MCF 10A (cell line): ENCODE measurements at regions of chr12 and their contacts with region 1.

Region 1: GRCh38 chr12:6890789-6891645 is 13.6 kb upstream of the LRRC23 start:
- DNase-seq: peak; percentile 93
- H3K4me3 Mint-ChIP-seq: peak overlapping the region; percentile 67
- H3K27ac Mint-ChIP-seq: peak overlapping the region; percentile 74
- H3K4me1 Mint-ChIP-seq: no peaks in the 10 kb centered on the region
- H3K27me3 Mint-ChIP-seq: no peaks in the 10 kb centered on the region
- CTCF ChIP-seq: peak; percentile 60

Region 2: GRCh38 chr12:6867413-6868210 is 23.4 kb before region 1 on chr12 and contains the start of gene TPI1:
- CTCF ChIA-PET with region 1: interaction called, 64 read pairs
- POLR2A ChIA-PET with region 1: interaction called, 37 read pairs
- intact Hi-C with region 1: loop called (anchors 1 kb)
- DNase-seq: peak; percentile 70
- H3K4me3 Mint-ChIP-seq: peak within 1 kb of the TSS; percentile 86
- H3K27ac Mint-ChIP-seq: peak within 1 kb of the TSS; percentile 82
- H3K4me1 Mint-ChIP-seq: peaks cover 30% of the 10 kb centered on the region
- H3K27me3 Mint-ChIP-seq: no peaks in the 10 kb centered on the region
- CTCF ChIP-seq: no peak
- total RNA-seq, gene TPI1: 498 and 549 TPM in 2 replicates

Region 3: GRCh38 chr12:6904280-6905278 is 13.6 kb after region 1 on chr12 and contains the start of gene LRRC23:
- CTCF ChIA-PET with region 1: interaction called, 15 read pairs
- POLR2A ChIA-PET with region 1: interaction called, 5 read pairs
- intact Hi-C with region 1: no loop called
- DNase-seq: peak; percentile 96
- H3K4me3 Mint-ChIP-seq: no peak within 1 kb of the TSS
- H3K27ac Mint-ChIP-seq: no peak within 1 kb of the TSS
- H3K4me1 Mint-ChIP-seq: peaks cover 2% of the 10 kb centered on the region
- H3K27me3 Mint-ChIP-seq: no peaks in the 10 kb centered on the region
- CTCF ChIP-seq: no peak
- total RNA-seq, gene LRRC23: 7.5 and 9.1 TPM in 2 replicates

Region 4: DNA sequence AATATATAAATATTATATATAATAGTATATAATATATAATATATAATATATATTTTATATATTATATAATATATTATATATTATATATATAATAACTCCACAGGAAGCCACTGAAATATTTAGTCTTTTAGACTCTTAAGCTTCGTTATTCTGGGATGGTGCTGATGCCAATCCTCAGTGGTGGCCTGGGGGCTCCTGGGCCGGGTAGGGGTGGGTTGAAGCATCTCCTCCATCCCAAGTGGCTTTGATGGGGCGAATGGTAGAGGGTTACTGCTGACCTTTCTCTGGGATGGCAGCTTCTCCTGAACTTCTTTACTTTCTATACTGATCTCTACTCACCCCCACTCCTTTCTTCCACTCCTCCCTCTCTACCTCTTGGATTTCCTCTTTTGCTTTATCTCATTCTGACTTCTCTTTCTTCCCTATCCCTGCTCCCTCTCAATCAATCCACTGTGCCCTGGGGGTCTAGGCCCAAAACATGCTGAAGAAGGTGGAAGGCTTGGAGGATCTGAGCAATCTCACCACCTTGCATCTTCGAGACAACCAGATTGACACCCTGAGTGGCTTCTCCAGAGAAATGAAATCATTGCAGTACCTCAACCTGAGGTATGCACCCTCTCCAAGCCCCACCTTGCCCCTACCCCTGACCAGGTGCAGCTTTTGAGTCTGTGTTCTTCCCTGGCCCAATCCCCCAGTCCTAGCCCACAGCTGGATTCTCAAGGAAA is 18.6 kb after region 1 on chr12:
- CTCF ChIA-PET with region 1: interaction called, 15 read pairs
- POLR2A ChIA-PET with region 1: interaction called, 5 read pairs
- intact Hi-C with region 1: no loop called
- DNase-seq: no peak
- H3K4me3 Mint-ChIP-seq: no peak overlapping the region
- H3K27ac Mint-ChIP-seq: no peak overlapping the region
- H3K4me1 Mint-ChIP-seq: peaks cover 2% of the 10 kb centered on the region
- H3K27me3 Mint-ChIP-seq: peaks cover 11% of the 10 kb centered on the region
- CTCF ChIP-seq: no peak

Region 5: DNA sequence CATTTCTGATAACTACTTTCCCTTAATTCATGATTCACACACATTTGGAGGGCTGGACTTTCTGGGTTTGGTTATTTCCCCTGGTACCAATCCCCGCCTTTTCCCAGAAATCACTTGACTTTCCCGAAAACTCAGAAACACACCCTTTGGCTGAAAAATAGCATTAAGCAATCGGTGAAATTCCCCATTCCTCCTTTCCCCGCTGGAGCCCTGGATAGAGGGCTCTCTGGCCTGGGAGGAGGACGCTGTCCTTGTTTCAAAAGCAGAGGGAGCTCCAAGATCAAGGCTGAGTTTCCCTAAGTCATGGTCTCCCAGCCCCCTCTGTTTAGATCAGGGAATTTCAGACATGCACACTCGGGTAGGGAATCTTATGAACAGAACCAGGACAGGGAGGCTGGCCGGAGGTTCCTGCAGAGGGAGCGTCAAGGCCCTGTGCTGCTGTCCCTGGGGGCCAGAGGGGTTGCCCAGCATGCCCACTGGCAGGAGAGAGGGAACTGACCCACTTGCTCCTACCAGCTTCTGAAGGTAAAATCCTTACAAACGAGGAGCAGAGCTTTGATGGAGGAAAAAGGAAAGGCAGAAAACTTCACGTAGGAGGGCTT is 169.4 kb after region 1 on chr12 and contains the start of gene C1S:
- CTCF ChIA-PET with region 1: no interaction called
- POLR2A ChIA-PET with region 1: no interaction called
- intact Hi-C with region 1: no loop called
- DNase-seq: peak; percentile 98
- H3K4me3 Mint-ChIP-seq: peak within 1 kb of the TSS; percentile 63
- H3K27ac Mint-ChIP-seq: peak within 1 kb of the TSS; percentile 87
- H3K4me1 Mint-ChIP-seq: peaks cover 20% of the 10 kb centered on the region
- H3K27me3 Mint-ChIP-seq: peaks cover under 1% of the 10 kb centered on the region
- CTCF ChIP-seq: peak; percentile 70
- total RNA-seq, gene C1S: 6.0 and 11.5 TPM in 2 replicates